Activated T-helper 2 cell treated with anti-CD3 and anti-CD28 coated beads, Interferon-gamma antibody, Interleukin-2, Interleukin-4, amounts not matched to agents 10 μg/mL and 5 μg/mL and 100 μg/mL, durations not matched to agents 14 hours and 24 hours and 36 hours (primary cell): ENCODE measurements at regions of chr2 and their contacts with region 1.

Region 1: DNA sequence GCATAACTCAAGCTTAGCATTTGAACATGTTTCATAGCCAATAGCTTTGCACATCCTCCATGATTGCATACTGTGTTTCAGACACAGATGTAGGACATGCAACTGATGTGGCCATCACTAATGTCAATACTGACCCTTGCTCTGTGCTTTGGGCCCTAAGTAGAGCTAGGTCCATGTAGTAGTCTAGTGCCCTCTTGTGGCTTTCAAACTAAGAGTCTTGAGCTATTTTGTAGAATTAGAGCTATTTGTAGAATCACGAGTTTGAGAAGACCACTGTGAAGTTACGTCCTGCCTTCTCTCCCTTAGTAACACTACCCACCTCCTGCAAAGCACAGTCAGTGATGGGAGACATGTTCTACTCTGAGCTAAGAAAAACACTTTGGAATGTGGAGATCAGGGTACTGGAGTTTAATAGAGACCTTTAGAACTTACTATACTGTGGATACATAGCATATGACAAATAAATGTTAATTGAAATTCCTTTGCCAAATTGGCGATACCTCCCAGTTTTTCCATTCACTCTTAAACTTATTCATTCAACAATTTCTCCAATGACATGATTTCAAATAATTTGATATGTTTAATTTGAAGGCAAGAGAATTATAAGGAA is 306.5 kb upstream of the TNP1 start:
- DNase-seq: no peak
- H3K4me3 Mint-ChIP-seq: no peak overlapping the region
- H3K27ac Mint-ChIP-seq: no peak overlapping the region
- H3K4me1 Mint-ChIP-seq: peaks cover 19% of the 10 kb centered on the region
- H3K27me3 Mint-ChIP-seq: peaks cover 18% of the 10 kb centered on the region

Region 2: GRCh38 chr2:216698895-216699294 is 467.5 kb before region 1 on chr2:
- intact Hi-C with region 1: loop called (anchors 5 kb)
- DNase-seq: no peak
- H3K4me3 Mint-ChIP-seq: no peak overlapping the region
- H3K27ac Mint-ChIP-seq: no peak overlapping the region
- H3K4me1 Mint-ChIP-seq: peaks cover 5% of the 10 kb centered on the region
- H3K27me3 Mint-ChIP-seq: peaks cover 36% of the 10 kb centered on the region

Region 3: GRCh38 chr2:216777650-216778273 is 388.6 kb before region 1 on chr2:
- intact Hi-C with region 1: loop called (anchors 2 kb)
- DNase-seq: peak; percentile 34
- H3K4me3 Mint-ChIP-seq: no peak overlapping the region
- H3K27ac Mint-ChIP-seq: no peak overlapping the region
- H3K4me1 Mint-ChIP-seq: peaks cover 2% of the 10 kb centered on the region
- H3K27me3 Mint-ChIP-seq: peaks cover 9% of the 10 kb centered on the region

Region 4: DNA sequence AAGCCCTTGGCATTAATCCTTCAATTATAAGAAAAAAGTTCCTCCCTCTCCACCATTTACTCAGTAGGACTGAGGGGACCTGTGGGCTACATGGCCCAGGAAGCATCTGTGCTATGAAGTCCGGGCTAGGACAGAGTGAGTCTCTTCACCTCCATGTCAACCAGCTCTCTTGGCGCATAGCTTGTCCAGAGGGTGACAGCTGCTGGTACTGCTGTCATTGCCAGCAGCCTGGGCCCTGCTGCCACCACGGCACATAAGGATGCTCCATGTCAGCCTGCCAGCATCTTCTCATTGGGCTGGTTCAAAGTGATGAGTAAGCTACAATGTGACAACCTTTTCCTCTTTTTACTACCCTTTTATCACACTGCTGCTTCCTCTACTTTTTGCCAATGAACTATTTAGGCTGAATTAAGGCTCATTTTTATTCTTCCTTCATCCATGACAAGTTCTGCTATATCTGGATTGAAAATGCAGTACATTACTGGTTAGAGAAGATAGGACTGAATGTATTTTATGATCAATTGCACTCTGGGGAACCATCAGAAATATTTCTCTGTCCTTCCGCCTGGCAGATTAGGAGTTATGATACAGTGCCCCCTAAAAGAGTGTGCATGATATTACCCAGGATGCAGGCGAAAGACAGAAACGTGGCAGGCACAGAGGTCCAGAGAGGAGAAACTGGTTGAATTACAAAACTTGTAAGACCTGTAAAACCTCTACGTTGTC is 47.6 kb before region 1 on chr2:
- intact Hi-C with region 1: no loop called
- DNase-seq: no peak
- H3K4me3 Mint-ChIP-seq: no peak overlapping the region
- H3K27ac Mint-ChIP-seq: no peak overlapping the region
- H3K4me1 Mint-ChIP-seq: peaks cover 2% of the 10 kb centered on the region
- H3K27me3 Mint-ChIP-seq: peaks cover 6% of the 10 kb centered on the region

Region 5: GRCh38 chr2:217340899-217341298 is 174.6 kb after region 1 on chr2:
- intact Hi-C with region 1: no loop called
- DNase-seq: no peak
- H3K4me3 Mint-ChIP-seq: no peak overlapping the region
- H3K27ac Mint-ChIP-seq: no peak overlapping the region
- H3K4me1 Mint-ChIP-seq: no peaks in the 10 kb centered on the region
- H3K27me3 Mint-ChIP-seq: peaks cover 4% of the 10 kb centered on the region